HCT116 (cell line): ENCODE measurements at regions of chr1 and their contacts with region 1.

Region 1: DNA sequence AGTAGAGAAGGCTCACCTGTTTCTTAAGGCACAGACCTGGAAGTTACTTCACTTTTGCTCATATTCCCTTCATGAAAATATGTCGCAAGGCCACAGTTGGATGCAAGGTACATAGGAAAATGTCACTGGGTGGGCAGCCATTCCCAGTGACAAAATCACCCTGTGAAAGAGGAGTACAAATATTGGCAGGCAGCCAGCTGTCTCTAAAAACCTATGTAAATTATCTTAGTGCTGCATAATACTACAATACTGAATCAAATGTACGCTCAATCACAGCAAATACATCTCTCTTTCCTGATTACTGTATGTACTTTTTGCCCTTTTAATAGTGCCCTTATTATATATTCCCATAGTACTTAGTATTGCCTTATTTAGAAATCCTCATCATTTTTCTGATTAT is 131.4 kb downstream of the TNNI3K start:
- DNase-seq: no peak
- ATAC-seq: no peak
- H3K4me3 ChIP-seq: no peak overlapping the region
- H3K27ac ChIP-seq: no peak overlapping the region
- H3K4me1 ChIP-seq: no peaks in the 10 kb centered on the region
- H3K27me3 ChIP-seq: no peaks in the 10 kb centered on the region
- CTCF ChIP-seq: no peak
- POLR2A ChIP-seq: no peak
- RAD21 ChIP-seq: no peak

Region 2: GRCh38 chr1:74343216-74343615 is 23.4 kb before region 1 on chr1:
- CTCF ChIA-PET with region 1: no interaction called
- POLR2A ChIA-PET with region 1: no interaction called
- RAD21 ChIA-PET with region 1: no interaction called
- intact Hi-C with region 1: loop called (anchors 1 kb)
- DNase-seq: no peak
- ATAC-seq: no peak
- H3K4me3 ChIP-seq: no peak overlapping the region
- H3K27ac ChIP-seq: no peak overlapping the region
- H3K4me1 ChIP-seq: no peaks in the 10 kb centered on the region
- H3K27me3 ChIP-seq: no peaks in the 10 kb centered on the region
- CTCF ChIP-seq: no peak
- POLR2A ChIP-seq: no peak
- RAD21 ChIP-seq: no peak